Activated naive CD4-positive, alpha-beta T cell treated with anti-CD3 and anti-CD28 coated beads for 36 hours (primary cell): ENCODE measurements at regions of chr15 and their contacts with region 1.

Region 1: GRCh38 chr15:45457641-45458433 is 64.7 kb downstream of the SLC30A4 start:
- DNase-seq: peak; percentile 90
- H3K4me3 Mint-ChIP-seq: peak overlapping the region; percentile 79
- H3K27ac Mint-ChIP-seq: peak overlapping the region; percentile 79
- H3K4me1 Mint-ChIP-seq: peaks cover 42% of the 10 kb centered on the region
- H3K27me3 Mint-ChIP-seq: no peaks in the 10 kb centered on the region

Region 2: DNA sequence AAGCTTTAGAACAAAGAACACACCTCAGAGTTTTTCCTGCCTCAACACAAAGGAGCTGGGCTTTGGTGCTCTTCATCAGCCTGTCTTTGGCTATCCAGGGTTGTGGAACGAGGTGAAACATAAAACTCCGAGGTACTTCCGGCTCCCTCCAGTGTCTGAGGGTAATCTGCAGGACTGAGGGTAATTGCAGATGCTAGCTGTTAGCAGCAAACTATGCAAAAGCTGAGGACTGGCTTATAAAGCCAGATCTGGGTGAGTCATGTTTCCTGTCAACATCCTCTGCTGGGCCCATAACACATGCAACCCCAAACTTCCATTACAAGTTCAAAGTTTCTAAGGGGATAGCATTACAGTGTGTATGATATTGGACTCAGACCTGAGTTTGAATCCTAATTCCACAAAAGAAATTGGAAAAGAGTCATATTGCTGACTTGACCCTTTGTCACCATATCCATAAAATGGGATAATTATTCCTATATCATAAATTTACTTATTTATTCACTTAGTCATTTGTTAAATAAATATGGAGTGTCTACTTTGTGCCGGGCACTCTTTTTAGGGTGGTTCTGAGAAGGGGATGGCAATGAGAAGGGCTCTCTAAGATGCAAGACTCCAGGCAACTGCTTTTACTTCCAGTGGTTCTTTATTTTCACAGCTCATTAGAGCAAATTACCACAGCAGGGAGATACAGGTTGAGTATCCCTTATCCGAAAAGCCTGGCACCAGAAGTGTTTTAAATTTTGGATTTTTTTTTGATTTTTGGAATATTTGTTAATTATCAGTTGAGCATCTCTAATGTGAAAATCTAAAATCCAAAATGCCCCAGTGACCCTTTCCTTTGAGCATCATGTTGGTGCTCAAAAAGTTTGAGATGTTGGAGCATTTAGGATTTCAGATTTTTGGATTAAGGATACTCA is 731.0 kb before region 1 on chr15:
- CTCF ChIA-PET with region 1: no interaction called
- intact Hi-C with region 1: no loop called
- DNase-seq: peak; percentile 85
- H3K4me3 Mint-ChIP-seq: peak overlapping the region; percentile 93
- H3K27ac Mint-ChIP-seq: peak overlapping the region; percentile 99
- H3K4me1 Mint-ChIP-seq: peaks cover 64% of the 10 kb centered on the region
- H3K27me3 Mint-ChIP-seq: no peaks in the 10 kb centered on the region

Region 3: DNA sequence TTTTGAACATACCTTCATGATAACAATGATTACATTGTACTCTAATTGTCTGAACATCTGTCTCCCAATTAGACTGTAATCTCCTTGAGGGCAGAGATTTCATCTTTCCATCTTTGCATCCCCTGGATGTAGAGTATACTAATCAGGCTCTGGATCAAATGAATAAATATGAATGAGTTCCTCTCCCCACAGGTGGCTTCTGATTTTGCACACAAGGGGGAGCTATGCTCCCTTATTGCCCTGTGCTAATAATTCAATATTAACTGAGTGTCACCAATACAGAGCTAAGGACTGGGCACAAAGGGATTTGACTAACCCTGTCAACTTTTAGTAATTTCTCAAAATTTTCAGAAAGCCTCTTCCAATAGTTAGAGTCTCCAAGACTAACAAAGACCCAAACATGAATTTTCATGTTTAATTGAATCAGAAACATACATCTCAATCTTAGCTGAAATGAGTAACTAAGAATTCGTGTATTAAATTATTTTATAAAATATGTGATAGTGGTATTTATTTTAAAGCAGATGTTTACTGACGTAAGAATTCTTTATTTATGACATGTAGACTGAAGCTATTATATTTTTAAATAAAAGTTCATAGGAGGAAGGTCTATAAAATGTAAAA is 331.2 kb before region 1 on chr15:
- CTCF ChIA-PET with region 1: interaction called, 3 read pairs
- intact Hi-C with region 1: loop called (anchors 1 kb)
- DNase-seq: peak; percentile 62
- H3K4me3 Mint-ChIP-seq: no peak overlapping the region
- H3K27ac Mint-ChIP-seq: no peak overlapping the region
- H3K4me1 Mint-ChIP-seq: peaks cover 4% of the 10 kb centered on the region
- H3K27me3 Mint-ChIP-seq: peaks cover 47% of the 10 kb centered on the region

Region 4: GRCh38 chr15:45205192-45205591 is 252.6 kb before region 1 on chr15:
- CTCF ChIA-PET with region 1: interaction called, 4 read pairs
- intact Hi-C with region 1: loop called (anchors 1 kb)
- DNase-seq: peak; percentile 86
- H3K4me3 Mint-ChIP-seq: no peak overlapping the region
- H3K27ac Mint-ChIP-seq: no peak overlapping the region
- H3K4me1 Mint-ChIP-seq: peaks cover 3% of the 10 kb centered on the region
- H3K27me3 Mint-ChIP-seq: peaks cover 4% of the 10 kb centered on the region

Region 5: DNA sequence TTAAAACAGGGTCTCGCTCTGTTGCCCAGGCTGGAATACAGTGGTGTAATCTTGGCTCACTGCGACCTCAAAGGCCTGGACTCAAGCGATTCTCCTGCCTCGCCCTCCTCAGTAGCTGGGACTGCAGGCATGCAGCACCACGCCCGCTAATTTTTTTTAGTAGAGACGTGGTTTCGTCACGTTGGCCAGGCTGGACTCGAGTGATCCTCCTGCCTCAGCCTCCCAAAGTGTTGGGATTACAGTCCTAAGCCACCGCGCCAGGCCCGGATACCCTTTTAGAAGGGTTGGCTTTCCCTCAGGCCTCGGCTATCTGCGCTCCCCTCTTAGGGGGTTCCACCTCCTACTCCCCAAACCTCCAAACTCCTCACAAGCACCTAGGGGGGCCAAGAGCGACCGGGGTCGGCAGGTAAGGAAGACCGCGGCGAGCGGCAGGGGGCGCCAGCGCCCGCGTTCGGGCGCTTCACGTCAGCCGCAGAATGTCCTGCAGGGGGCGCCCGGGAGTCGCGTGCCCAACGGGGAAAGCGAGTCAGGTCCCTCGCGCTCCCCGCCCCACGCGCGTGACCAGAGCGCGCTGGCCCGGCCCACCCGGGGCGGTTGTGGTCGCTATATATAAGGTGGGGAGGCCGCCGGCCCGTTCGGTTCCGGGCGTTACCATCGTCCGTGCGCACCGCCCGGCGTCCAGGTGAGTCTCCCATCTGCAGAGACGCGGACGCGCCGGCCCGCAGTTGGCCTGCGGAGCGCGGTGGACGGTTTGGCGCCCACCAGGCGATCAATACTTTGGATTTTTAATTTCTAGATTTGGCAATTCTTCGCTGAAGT is 27.7 kb before region 1 on chr15:
- CTCF ChIA-PET with region 1: interaction called, 77 read pairs
- intact Hi-C with region 1: loop called (anchors 1 kb)
- DNase-seq: peak; percentile 83
- H3K4me3 Mint-ChIP-seq: peak overlapping the region; percentile 51
- H3K27ac Mint-ChIP-seq: no peak overlapping the region
- H3K4me1 Mint-ChIP-seq: peaks cover 2% of the 10 kb centered on the region
- H3K27me3 Mint-ChIP-seq: peaks cover 4% of the 10 kb centered on the region

Region 6: GRCh38 chr15:45587095-45587860 is 129.4 kb after region 1 on chr15 and contains the start of gene BLOC1S6:
- CTCF ChIA-PET with region 1: interaction called, 20 read pairs
- intact Hi-C with region 1: loop called (anchors 1 kb)
- DNase-seq: peak; percentile 91
- H3K4me3 Mint-ChIP-seq: peak within 1 kb of the TSS; percentile 100
- H3K27ac Mint-ChIP-seq: peak within 1 kb of the TSS; percentile 100
- H3K4me1 Mint-ChIP-seq: peaks cover 41% of the 10 kb centered on the region
- H3K27me3 Mint-ChIP-seq: no peaks in the 10 kb centered on the region
- total RNA-seq, gene BLOC1S6: 36.8 to 42.8 TPM

Region 7: DNA sequence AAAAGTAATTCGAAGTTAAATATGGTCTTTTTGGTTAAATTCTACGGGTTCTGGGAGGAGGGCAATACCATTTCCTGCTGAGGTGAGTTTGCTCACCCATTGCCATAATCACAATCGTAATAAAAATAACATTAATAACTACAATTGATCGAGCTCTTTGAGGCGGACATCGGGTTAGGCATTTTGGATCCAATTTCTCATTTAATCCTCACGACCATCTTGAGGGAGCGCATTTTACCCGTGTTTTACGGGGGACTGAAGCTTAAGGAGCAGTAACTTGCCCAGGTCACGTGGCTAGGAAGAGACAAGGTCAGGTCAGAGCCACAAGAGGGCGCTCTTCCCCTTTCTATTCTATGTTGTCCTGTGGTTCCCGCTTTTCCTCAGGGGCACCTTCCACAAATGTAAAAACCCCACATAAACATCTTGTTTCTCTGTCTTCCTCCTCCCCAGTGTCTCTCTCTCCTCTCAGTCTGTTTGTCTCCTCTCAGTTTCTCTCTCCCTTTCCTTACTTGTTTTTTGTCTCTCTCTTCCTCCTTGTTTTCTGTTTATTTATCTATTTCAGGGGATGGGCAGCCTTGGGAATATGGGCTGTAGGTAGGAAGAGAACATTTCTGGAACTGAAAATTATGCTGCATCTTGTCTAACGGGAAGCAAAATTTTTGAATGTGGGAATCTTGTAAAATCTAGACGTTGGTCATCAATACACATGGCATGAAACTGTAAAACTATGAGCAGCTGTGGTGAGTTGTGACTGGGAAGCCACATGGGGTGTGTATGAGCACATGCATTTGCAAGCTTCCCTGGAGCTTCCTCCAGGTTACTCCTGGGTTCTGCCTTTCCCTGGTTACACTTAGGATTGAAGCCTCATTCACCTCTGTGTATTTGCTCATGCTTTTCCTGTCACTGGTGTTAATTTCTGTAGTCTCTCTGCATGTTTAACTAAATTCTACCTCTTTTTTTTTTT is 248.0 kb after region 1 on chr15:
- CTCF ChIA-PET with region 1: interaction called, 3 read pairs
- intact Hi-C with region 1: loop called (anchors 2 kb)
- DNase-seq: peak; percentile 79
- H3K4me3 Mint-ChIP-seq: peak overlapping the region; percentile 77
- H3K27ac Mint-ChIP-seq: peak overlapping the region; percentile 48
- H3K4me1 Mint-ChIP-seq: peaks cover 11% of the 10 kb centered on the region
- H3K27me3 Mint-ChIP-seq: peaks cover 3% of the 10 kb centered on the region